ENCODE measurements at regions of chr2 and their contacts with region 1.

Region 1: GRCh38 chr2:61016808-61017555 is 538 bp upstream of the PEX13 start:
- DNase-seq: peak; percentile 63
- H3K4me3 Mint-ChIP-seq: peak overlapping the region; percentile 97
- H3K27ac Mint-ChIP-seq: peak overlapping the region; percentile 96
- H3K4me1 Mint-ChIP-seq: peaks cover 37% of the 10 kb centered on the region
- H3K27me3 Mint-ChIP-seq: no peaks in the 10 kb centered on the region

Region 2: DNA sequence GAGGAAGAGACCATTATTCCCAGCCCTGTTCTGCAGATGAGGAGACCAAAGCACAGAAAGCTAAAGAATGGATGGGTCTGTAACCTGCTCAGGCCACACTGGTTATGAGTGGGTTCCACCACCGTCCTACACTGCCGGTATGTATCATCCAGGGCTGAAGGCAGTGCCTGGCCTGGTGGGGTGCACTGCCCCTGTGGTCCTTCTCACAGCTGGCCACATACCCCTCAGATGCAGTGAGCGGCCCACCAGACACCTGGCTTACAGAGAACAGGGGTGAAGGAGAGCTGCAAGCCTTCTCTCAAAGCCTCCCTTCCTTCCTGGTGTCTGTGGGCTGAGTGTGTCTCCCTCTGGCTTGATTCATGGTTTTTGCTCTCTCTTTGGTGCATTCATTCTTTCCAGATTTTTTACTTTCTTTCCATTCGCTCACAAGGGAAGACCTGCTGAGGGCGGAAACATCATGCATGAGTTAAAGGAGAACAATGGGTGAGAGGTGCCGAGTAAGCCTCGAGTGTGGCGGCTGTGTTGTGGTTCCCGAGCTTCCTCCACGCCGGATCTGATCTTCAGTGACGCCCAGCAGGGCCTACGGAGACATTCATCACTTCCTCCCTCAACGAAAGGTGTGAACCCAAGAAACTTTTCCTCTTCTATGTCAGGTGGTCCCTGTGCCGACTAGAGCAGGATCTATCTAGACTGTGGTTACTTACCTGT is 197.7 kb before region 1 on chr2:
- intact Hi-C with region 1: loop called (anchors 1 kb)
- DNase-seq: peak; percentile 80
- H3K4me3 Mint-ChIP-seq: peak overlapping the region; percentile 20
- H3K27ac Mint-ChIP-seq: peak overlapping the region; percentile 91
- H3K4me1 Mint-ChIP-seq: peaks cover 44% of the 10 kb centered on the region
- H3K27me3 Mint-ChIP-seq: no peaks in the 10 kb centered on the region

Region 3: GRCh38 chr2:60976875-60977561 is 40.0 kb before region 1 on chr2:
- intact Hi-C with region 1: loop called (anchors 1 kb)
- DNase-seq: no peak
- H3K4me3 Mint-ChIP-seq: no peak overlapping the region
- H3K27ac Mint-ChIP-seq: peak overlapping the region; percentile 38
- H3K4me1 Mint-ChIP-seq: peaks cover 29% of the 10 kb centered on the region
- H3K27me3 Mint-ChIP-seq: no peaks in the 10 kb centered on the region

Region 4: GRCh38 chr2:61029533-61029932 is 12.6 kb after region 1 on chr2:
- intact Hi-C with region 1: no loop called
- DNase-seq: no peak
- H3K4me3 Mint-ChIP-seq: no peak overlapping the region
- H3K27ac Mint-ChIP-seq: no peak overlapping the region
- H3K4me1 Mint-ChIP-seq: peaks cover 4% of the 10 kb centered on the region
- H3K27me3 Mint-ChIP-seq: no peaks in the 10 kb centered on the region

Region 5: DNA sequence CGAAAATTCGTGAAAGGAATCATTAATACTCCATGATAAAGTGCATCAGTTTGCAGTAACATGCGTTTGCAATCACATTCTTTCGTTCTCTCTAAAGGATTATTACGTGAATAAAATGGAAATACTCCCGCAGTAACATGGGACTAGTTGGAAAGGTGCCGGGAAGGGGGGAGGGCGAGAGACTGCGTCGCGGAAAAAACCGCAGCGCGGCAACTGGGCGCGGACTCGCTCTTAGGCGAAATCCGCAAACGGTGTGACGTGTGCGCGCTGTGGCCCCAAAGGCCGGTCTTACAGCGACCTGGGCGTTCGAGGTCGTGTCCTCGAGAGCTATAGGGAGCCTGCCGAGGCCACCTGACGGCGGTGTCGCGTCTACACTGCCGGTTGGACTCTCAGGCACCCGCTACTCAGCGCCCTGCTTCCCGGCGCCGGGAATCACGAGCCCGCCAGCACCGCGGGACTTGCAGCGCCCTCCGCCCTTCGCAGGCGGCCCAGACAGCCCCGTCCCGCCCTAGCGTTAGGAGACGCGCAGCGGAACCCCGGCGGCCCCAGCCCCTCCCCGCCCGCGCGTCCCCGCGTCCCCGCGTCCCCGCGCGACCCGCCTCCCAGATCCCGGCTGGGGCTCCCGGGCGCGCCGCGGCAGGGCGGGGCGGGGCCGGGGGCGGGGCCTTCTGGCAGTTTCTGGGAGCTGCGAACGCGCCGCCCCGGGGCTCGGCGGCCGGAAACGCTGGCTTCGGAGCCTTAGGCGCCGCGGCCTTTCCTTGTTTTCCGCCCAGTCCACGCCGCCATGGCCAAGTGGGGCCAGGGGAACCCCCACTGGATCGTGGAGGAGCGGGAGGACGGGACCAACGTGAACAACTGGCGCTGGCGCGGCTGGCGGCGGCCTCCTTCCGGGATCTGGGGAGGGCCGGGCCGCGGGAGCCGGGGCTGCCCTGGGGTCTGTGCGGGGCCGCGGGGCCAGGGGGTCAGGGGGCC is 160.1 kb after region 1 on chr2:
- intact Hi-C with region 1: loop called (anchors 1 kb)
- DNase-seq: peak; percentile 92
- H3K4me3 Mint-ChIP-seq: peak overlapping the region; percentile 90
- H3K27ac Mint-ChIP-seq: peak overlapping the region; percentile 87
- H3K4me1 Mint-ChIP-seq: peaks cover 48% of the 10 kb centered on the region
- H3K27me3 Mint-ChIP-seq: peaks cover 10% of the 10 kb centered on the region

Region 6: GRCh38 chr2:61764035-61764800 is 747.2 kb after region 1 on chr2:
- intact Hi-C with region 1: loop called (anchors 5 kb)
- DNase-seq: peak; percentile 96
- H3K4me3 Mint-ChIP-seq: peak overlapping the region; percentile 91
- H3K27ac Mint-ChIP-seq: peak overlapping the region; percentile 97
- H3K4me1 Mint-ChIP-seq: peaks cover 24% of the 10 kb centered on the region
- H3K27me3 Mint-ChIP-seq: no peaks in the 10 kb centered on the region